ENCODE measurements at regions of chr3 and their contacts with region 1.

Region 1: DNA sequence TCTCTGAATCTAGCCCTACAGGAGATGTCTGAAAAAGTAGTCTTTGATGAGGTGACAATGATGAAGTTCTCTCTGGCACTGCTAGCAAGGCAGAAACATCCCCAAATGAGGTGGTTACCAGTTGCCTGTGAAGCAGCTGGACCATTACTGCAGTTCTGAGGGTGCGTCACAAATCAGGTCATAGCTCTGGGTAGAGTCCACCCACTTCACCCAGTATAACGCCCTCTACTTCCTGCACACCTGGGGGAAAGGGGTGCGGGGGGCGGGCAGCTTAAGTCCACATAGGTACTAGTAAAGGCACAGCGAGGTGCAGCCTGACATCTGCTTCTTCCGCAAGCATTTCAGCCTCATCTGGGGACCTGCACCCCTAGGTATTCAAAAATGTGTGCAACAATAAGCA is 13.4 kb upstream of the SATB1 start:
- DNase-seq: peak; percentile 67
- H3K4me3 Mint-ChIP-seq: peak overlapping the region; percentile 73
- H3K27ac Mint-ChIP-seq: peak overlapping the region; percentile 84
- H3K4me1 Mint-ChIP-seq: peaks cover 51% of the 10 kb centered on the region
- H3K27me3 Mint-ChIP-seq: no peaks in the 10 kb centered on the region

Region 2: GRCh38 chr3:18424729-18425640 is 13.6 kb before region 1 on chr3 and contains the start of gene SATB1:
- CTCF ChIA-PET with region 1: interaction called, 3 read pairs
- POLR2A ChIA-PET with region 1: interaction called, 180 read pairs
- DNase-seq: peak; percentile 71
- H3K4me3 Mint-ChIP-seq: peak within 1 kb of the TSS; percentile 81
- H3K27ac Mint-ChIP-seq: peak within 1 kb of the TSS; percentile 79
- H3K4me1 Mint-ChIP-seq: peaks cover 67% of the 10 kb centered on the region
- H3K27me3 Mint-ChIP-seq: no peaks in the 10 kb centered on the region
- total RNA-seq, gene SATB1: 263 to 267 TPM

Region 3: DNA sequence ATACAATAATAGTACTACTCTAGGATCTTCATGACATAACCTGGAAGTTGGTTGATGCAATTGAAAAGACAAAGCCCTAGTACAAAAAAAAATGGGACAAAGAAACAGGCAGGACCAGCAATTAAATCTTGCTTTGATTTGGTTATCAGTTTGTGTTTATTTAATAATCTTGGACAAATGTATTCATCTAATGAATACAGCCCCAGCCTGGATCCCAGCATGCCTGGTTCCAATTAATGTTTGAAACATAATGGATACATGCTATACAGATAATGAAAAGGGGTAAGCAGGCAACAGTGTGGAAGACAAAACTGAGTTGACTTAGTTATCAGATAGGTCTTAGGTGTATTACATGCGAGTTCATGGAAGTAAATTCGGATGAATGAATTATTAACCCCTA is 16.2 kb after region 1 on chr3:
- CTCF ChIA-PET with region 1: no interaction called
- POLR2A ChIA-PET with region 1: no interaction called
- DNase-seq: no peak
- H3K4me3 Mint-ChIP-seq: no peak overlapping the region
- H3K27ac Mint-ChIP-seq: no peak overlapping the region
- H3K4me1 Mint-ChIP-seq: peaks cover 26% of the 10 kb centered on the region
- H3K27me3 Mint-ChIP-seq: no peaks in the 10 kb centered on the region

Measured in activated CD4-positive, alpha-beta memory T cell treated with anti-CD3 and anti-CD28 coated beads, Interleukin-2, amount 10 ng/mL, durations not matched to agents 7 days and 5 days (primary cell).